ENCODE measurements at regions of chr14 and their contacts with region 1.

Region 1: GRCh38 chr14:80930836-80931389 is 10.6 kb downstream of the CEP128 start:
- DNase-seq: peak in 3 of 5 donors; percentile 70 to 83 (median 80)
- H3K4me3 ChIP-seq: no peak overlapping the region
- H3K4me3 Mint-ChIP-seq: peak overlapping the region; percentile 2 to 70 (median 65)
- H3K27ac ChIP-seq: peak overlapping the region; percentile 33
- H3K27ac Mint-ChIP-seq: peak overlapping the region; percentile 70 to 98 (median 92)
- H3K4me1 ChIP-seq: peaks cover 24% of the 10 kb centered on the region
- H3K4me1 Mint-ChIP-seq: peaks cover 39 to 71% (median 68%) of the 10 kb centered on the region in 3 donors
- H3K27me3 ChIP-seq: no peaks in the 10 kb centered on the region
- H3K27me3 Mint-ChIP-seq: no peaks in the 10 kb centered on the region

Region 2: GRCh38 chr14:80906946-80907345 is 24.0 kb before region 1 on chr14:
- CTCF ChIA-PET with region 1: no interaction called
- POLR2A ChIA-PET with region 1: no interaction called
- DNase-seq: no peak
- H3K4me3 ChIP-seq: no peak overlapping the region
- H3K4me3 Mint-ChIP-seq: no peak overlapping the region
- H3K27ac ChIP-seq: no peak overlapping the region
- H3K27ac Mint-ChIP-seq: no peak overlapping the region
- H3K4me1 ChIP-seq: no peaks in the 10 kb centered on the region
- H3K4me1 Mint-ChIP-seq: peaks cover 0 to 9% (median 5%) of the 10 kb centered on the region in 3 donors
- H3K27me3 ChIP-seq: no peaks in the 10 kb centered on the region
- H3K27me3 Mint-ChIP-seq: no peaks in the 10 kb centered on the region

Region 3: GRCh38 chr14:80941241-80942182 is 10.6 kb after region 1 on chr14 and contains the start of gene CEP128:
- CTCF ChIA-PET with region 1: interaction called, 12 read pairs
- POLR2A ChIA-PET with region 1: interaction called, 17 read pairs
- DNase-seq: peak; percentile 51 to 86 (median 81)
- H3K4me3 ChIP-seq: peak within 1 kb of the TSS; percentile 68
- H3K4me3 Mint-ChIP-seq: peak within 1 kb of the TSS; percentile 80 to 96 (median 90)
- H3K27ac ChIP-seq: peak within 1 kb of the TSS; percentile 62
- H3K27ac Mint-ChIP-seq: peak within 1 kb of the TSS; percentile 86 to 99 (median 93)
- H3K4me1 ChIP-seq: peaks cover 9% of the 10 kb centered on the region
- H3K4me1 Mint-ChIP-seq: peaks cover 16 to 35% (median 21%) of the 10 kb centered on the region in 3 donors
- H3K27me3 ChIP-seq: no peaks in the 10 kb centered on the region
- H3K27me3 Mint-ChIP-seq: no peaks in the 10 kb centered on the region
- total RNA-seq, gene CEP128: 15.4 to 17.1 TPM

Region 4: GRCh38 chr14:80977221-80977620 is 46.3 kb after region 1 on chr14:
- CTCF ChIA-PET with region 1: no interaction called
- POLR2A ChIA-PET with region 1: no interaction called
- DNase-seq: no peak
- H3K4me3 ChIP-seq: no peak overlapping the region
- H3K4me3 Mint-ChIP-seq: no peak overlapping the region
- H3K27ac ChIP-seq: no peak overlapping the region
- H3K27ac Mint-ChIP-seq: peak overlapping the region in 1 of 8 donors; percentile 7
- H3K4me1 ChIP-seq: peaks cover 5% of the 10 kb centered on the region
- H3K4me1 Mint-ChIP-seq: peaks cover 24 to 49% (median 31%) of the 10 kb centered on the region in 3 donors
- H3K27me3 ChIP-seq: no peaks in the 10 kb centered on the region
- H3K27me3 Mint-ChIP-seq: no peaks in the 10 kb centered on the region

Region 5: GRCh38 chr14:81157431-81157830 is 226.5 kb after region 1 on chr14:
- CTCF ChIA-PET with region 1: no interaction called
- POLR2A ChIA-PET with region 1: no interaction called
- DNase-seq: no peak
- H3K4me3 ChIP-seq: no peak overlapping the region
- H3K4me3 Mint-ChIP-seq: no peak overlapping the region
- H3K27ac ChIP-seq: no peak overlapping the region
- H3K27ac Mint-ChIP-seq: no peak overlapping the region
- H3K4me1 ChIP-seq: no peaks in the 10 kb centered on the region
- H3K4me1 Mint-ChIP-seq: no peaks in the 10 kb centered on the region
- H3K27me3 ChIP-seq: no peaks in the 10 kb centered on the region
- H3K27me3 Mint-ChIP-seq: no peaks in the 10 kb centered on the region

Measured in CD8-positive, alpha-beta memory T cell (primary cell).